ENCODE measurements at regions of chr3 and their contacts with region 1.

Region 1: DNA sequence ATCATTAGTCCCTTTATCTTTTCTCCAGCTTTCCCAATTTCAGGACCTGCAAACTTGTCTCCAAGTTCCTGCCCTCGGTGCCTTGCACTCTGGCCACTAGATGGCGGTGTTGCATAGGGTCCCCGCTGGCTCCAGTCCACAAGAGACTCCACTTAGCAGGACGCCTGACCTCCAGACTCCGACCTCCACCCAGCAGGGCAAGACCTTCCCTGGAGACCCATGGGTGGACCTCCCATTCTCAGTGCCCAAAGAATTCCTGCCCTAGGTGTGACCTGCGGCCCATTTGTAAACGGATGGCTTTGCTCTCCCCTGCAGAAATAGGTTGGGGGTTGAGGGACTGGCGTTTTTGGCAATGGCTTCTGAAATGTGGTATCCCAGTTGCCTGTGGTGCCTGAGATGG is 82.6 kb downstream of the LSM3 start:
- DNase-seq: peak; percentile 90
- ATAC-seq: peak; percentile 82

Region 2: DNA sequence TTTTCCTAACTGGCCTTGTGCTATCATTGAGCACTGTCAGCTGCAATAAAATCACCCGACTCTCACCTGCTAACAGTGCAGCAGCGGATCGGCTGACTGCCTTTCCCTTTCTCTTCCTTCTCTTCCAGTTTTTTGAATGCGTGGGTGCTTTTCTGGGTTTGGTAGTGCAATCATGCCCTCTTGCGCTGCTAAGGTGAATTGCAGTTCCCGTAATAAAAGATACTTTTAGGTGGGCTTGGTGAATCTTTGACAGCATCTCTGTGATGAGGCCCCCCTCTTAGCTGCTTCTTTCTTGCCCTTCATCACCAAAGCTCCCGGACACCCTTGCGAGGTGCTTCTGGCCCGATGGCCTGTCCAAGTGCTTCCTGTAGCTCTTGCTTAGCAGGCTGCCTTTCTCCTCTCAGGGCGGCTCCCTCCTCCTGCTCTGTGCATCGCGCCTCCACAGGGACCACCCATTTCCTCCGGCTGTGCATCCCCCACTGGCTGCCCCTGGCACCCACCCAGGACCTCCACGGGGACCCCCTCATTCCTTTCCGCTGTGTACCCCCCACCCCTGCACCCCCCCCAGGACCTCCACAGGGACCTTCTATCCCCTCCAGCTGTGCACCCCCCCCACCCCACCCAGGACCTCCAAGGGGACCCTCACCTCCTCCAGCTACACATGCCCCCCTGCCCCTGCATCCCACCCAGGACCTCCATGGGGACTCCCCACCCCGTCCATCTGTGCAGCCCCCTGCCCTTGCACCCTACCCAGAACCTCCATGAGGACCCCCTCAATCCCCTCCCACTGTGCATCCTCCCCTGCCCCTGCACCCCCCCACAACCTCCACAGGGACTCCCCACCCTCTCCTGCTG is 1369.0 kb before region 1 on chr3:
- intact Hi-C with region 1: no loop called
- DNase-seq: peak; percentile 48
- ATAC-seq: peak; percentile 53

Region 3: GRCh38 chr3:13895155-13896105 is 365.8 kb before region 1 on chr3:
- intact Hi-C with region 1: loop called (anchors 2 kb)
- DNase-seq: peak; percentile 94
- ATAC-seq: peak; percentile 99

Region 4: DNA sequence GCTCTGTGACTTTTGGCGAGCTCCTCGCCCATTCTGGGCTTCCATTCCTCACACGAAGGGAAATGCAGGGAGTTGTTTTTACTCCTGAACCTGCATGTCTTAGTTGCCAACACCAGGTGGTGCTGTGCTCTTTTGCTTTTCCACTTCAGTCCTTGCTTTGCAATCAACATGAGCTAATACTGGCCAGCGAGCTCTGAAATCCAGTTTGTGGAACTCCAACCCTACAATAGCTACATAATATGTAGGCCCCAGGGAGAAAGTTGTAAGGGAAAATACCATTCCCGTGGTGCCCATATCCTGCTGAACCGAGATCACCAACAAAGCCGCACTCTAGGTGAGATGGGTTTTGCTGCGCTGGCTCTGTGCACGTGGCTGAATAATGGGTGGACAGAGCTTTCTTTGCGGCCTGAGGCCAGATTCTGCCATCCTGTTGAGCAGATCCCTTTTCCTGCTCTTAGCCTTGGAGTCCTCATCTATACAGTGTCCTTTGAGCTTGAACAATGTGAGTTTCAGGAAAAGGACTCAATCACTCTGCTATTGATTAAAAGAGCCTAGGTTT is 57.6 kb before region 1 on chr3:
- intact Hi-C with region 1: loop called (anchors 2 kb)
- DNase-seq: no peak
- ATAC-seq: peak; percentile 72

Region 5: DNA sequence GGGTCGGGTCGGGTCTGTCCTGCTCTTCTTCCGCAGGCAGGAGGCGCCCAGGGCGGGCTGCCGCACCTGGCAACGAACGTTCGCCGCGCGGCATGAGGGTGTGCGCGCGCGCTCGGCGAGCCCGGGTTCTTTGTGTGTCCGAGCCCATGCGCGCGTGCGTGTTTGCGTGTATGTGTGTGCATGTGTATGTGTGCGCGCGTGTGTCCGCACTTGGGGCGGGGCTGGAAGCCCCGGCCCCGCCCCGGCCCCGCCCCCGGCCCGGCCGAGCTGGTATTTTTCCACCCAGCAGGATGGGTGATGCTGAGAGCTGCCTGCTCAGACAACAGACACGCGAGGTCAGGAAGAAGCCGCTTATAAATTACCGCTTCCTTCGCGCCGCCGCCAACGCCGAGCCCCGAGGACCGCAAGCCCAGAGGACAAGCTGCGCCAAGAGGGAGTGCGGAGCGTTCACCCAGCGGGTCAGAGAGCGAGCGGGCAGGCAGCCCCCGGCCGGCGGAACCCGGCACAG is 141.1 kb after region 1 on chr3 and contains the start of gene SLC6A6:
- intact Hi-C with region 1: loop called (anchors 10 kb)
- DNase-seq: peak; percentile 99
- ATAC-seq: peak; percentile 92
- total RNA-seq, gene SLC6A6: 14.3 TPM

Region 6: DNA sequence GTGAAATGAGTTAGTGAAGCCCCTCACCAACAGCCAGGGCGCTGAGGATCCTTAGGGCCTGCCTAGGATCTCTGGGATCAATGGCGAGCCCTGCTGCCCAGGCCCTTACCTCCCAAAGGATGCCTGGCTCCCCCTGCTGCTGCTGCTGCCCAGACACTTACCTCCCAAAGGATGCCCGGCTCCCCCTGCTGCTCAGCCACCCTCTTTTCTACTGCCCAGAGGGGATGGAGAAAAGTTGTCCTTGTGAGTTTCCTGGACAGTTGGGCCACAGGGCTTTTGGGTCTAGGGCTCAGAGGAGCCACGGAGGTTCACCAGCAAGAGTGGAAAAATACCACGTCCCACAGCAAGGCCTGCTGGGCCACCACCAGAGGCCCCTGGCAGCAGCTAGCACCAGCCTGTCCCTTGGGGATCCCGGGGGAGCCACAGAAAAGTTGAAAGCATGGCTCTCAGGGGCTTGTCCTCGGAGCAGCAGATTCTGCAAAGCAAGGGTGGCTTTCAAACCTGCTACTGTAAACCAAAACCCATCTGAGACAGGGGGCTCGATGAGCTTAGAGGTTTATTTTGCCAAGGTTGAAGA is 200.6 kb after region 1 on chr3:
- intact Hi-C with region 1: loop called (anchors 1 kb)
- DNase-seq: no peak
- ATAC-seq: peak; percentile 45

Region 7: DNA sequence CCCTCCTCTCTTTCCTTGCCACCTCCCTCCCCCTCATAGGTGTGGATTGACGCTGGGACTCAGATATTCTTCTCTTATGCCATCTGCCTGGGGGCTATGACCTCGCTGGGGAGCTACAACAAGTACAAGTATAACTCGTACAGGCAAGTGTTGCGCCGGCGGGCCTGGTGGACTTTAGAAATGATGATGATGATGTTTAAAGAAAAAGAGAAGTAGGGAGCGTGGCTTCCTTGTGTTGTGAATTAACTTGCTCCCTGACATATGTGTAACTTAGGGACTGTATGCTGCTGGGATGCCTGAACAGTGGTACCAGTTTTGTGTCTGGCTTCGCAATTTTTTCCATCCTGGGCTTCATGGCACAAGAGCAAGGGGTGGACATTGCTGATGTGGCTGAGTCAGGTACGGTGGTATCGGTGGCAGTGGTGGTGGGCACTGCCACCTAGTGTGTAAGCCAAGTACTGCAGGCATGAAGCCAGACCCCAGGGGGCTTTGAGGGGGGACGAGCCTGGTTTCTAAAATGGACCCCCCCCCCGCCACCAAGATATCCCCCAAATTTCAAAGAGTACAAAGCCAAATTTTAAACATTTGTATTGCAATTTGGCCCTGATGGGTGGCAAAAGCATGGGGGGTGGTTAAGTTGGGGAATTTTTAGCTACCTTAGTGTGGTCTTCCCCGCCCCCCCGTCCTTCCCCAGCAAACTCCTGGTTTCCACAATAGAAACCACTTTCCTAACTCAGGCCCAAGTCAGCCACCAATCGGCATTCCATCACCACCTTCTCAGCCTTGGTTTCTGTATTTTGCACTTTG is 206.8 kb after region 1 on chr3:
- intact Hi-C with region 1: loop called (anchors 2 kb)
- DNase-seq: no peak
- ATAC-seq: peak; percentile 59

Region 8: GRCh38 chr3:14548321-14548729 is 287.1 kb after region 1 on chr3:
- intact Hi-C with region 1: loop called (anchors 1 kb)
- DNase-seq: no peak
- ATAC-seq: peak; percentile 86